ENCODE measurements at regions of chr20 and their contacts with region 1.

Region 1: GRCh38 chr20:24560571-24561491 is 91.4 kb downstream of the SYNDIG1 start:
- DNase-seq: no peak
- ATAC-seq: peak in 2 of 4 donors; percentile 22 to 29
- H3K4me3 ChIP-seq: no peak overlapping the region
- H3K27ac ChIP-seq: no peak overlapping the region
- H3K4me1 ChIP-seq: peaks cover 0 to 10% (median 0%) of the 10 kb centered on the region in 12 donors
- H3K27me3 ChIP-seq: no peaks in the 10 kb centered on the region
- CTCF ChIP-seq: no peak
- POLR2A ChIP-seq: no peak

Region 2: GRCh38 chr20:24507182-24507853 is 53.5 kb before region 1 on chr20:
- intact Hi-C with region 1: loop called in 2 of 10 experiments (anchors 5 to 10 kb)
- DNase-seq: no peak
- ATAC-seq: no peak
- H3K4me3 ChIP-seq: no peak overlapping the region
- H3K27ac ChIP-seq: peak overlapping the region in 3 of 12 donors; percentile 14 to 95 (median 92)
- H3K4me1 ChIP-seq: peaks cover 0 to 47% (median 9%) of the 10 kb centered on the region in 12 donors
- H3K27me3 ChIP-seq: no peaks in the 10 kb centered on the region
- CTCF ChIP-seq: no peak
- POLR2A ChIP-seq: no peak

Region 3: GRCh38 chr20:24519476-24519875 is 41.4 kb before region 1 on chr20:
- intact Hi-C with region 1: loop called in 2 of 10 experiments (anchors 5 to 10 kb)
- DNase-seq: no peak
- ATAC-seq: no peak
- H3K4me3 ChIP-seq: no peak overlapping the region
- H3K27ac ChIP-seq: no peak overlapping the region
- H3K4me1 ChIP-seq: no peaks in the 10 kb centered on the region
- H3K27me3 ChIP-seq: no peaks in the 10 kb centered on the region
- CTCF ChIP-seq: no peak
- POLR2A ChIP-seq: no peak

Measured in heart left ventricle (tissue), 16 donors.